Heart left ventricle (tissue), 16 donors: ENCODE measurements at regions of chr1 and their contacts with region 1.

Region 1: DNA sequence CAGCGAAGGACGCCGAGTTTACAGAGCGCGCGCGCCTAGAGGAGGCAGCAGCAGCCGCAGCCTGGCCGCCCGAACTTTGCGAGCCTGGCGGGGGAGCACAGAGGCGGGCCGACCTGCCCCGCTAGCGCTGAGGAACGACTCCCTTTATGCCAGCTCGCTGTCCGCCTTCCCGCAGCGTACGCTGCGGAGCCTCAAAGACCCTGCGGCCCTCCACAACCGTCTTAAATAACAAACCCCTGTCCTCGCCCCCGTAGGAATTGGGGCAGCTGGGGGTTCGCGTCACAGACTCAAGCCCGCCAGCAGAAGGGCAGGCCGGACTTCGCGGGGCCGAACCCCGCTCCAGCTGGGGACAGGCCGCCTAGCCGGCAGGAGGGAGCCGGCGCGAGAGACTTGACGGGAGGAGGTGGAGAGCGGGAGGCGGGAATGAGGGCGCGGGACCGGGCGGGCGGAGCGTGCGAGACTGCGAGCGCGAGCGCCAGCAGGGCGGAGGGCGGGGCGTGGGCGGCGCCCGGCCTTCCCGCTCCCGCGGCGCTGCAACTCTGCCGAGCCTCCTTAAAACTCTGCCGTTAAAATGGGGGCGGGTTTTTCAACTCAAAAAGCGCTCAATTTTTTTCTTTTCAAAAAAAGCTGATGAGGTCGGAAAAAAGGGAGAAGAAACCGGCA is 1.8 kb upstream of the CDKN2C start:
- DNase-seq: peak; percentile 94 to 96 (median 95)
- ATAC-seq: peak; percentile 90 to 96 (median 95)
- H3K4me3 ChIP-seq: peak overlapping the region; percentile 57 to 91 (median 82)
- H3K27ac ChIP-seq: peak overlapping the region; percentile 92 to 99 (median 96)
- H3K4me1 ChIP-seq: peaks cover 0 to 39% (median 12%) of the 10 kb centered on the region in 12 donors
- H3K27me3 ChIP-seq: no peaks in the 10 kb centered on the region
- CTCF ChIP-seq: peak in 11 of 12 donors; percentile 12 to 56 (median 41)
- POLR2A ChIP-seq: peak in 1 of 2 donors; percentile 70

Region 2: DNA sequence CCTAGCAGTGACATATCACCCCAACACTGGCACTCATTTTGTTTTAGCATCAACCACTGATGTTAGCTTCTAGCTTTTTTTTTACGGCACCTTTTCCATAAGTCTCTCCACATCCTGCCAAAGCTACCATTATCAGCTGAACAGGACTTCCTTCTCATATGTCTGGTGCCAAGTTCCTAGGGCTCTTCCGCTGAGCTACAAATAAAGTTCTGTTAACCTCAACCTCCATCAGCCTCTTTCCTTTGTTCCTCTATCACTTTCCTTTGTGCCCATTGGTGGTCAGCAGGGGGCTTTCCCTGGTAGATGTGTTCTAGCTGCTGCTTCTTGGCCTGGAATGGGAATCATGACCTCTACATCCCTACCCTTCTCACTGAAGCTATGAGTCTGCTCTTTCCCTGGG is 172.0 kb before region 1 on chr1:
- intact Hi-C with region 1: no loop called
- DNase-seq: no peak
- ATAC-seq: no peak
- H3K4me3 ChIP-seq: no peak overlapping the region
- H3K27ac ChIP-seq: no peak overlapping the region
- H3K4me1 ChIP-seq: peaks cover 0 to 5% (median 0%) of the 10 kb centered on the region in 12 donors
- H3K27me3 ChIP-seq: no peaks in the 10 kb centered on the region
- CTCF ChIP-seq: no peak
- POLR2A ChIP-seq: no peak

Region 3: GRCh38 chr1:50929376-50929958 is 38.8 kb before region 1 on chr1:
- intact Hi-C with region 1: loop called in 1 of 10 experiments (anchors 5 kb)
- DNase-seq: no peak
- ATAC-seq: no peak
- H3K4me3 ChIP-seq: no peak overlapping the region
- H3K27ac ChIP-seq: no peak overlapping the region
- H3K4me1 ChIP-seq: peaks cover 0 to 14% (median 1%) of the 10 kb centered on the region in 12 donors
- H3K27me3 ChIP-seq: no peaks in the 10 kb centered on the region
- CTCF ChIP-seq: peak; percentile 39 to 71 (median 53)
- POLR2A ChIP-seq: no peak

Region 4: DNA sequence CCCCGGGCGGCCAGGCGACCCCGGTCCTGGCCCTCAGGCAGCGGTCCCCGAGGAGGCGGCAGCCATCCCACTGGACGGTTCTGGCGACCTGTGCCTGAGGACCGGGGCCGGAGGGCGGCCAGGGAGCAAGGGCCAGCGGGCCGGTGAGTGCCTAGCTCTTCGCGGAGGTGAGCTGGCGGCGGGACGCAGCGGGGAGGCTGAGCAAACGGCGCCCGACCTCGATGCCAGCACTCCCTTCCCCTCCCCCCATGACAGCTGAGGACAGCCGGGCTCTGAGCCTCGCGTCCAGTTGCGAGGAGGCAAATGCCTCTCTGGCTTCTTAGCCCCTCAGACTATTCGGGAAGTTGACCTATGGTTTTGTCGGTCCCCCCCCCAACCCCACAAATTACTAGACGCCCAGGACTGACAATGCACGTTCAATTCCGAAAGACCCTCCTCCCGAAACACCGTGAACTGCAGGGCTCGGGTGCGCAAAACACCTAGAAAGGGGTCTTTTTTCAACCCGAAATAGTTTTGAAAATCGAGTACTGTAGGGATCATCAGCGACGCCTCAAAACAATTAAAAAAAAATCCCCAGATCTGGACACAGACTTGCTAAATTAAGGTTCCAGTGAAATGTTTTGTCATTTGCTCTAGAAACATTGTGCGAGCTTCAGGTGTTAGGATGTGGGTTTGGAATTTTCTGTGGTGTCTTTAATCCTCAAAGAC is 10.0 kb after region 1 on chr1:
- intact Hi-C with region 1: loop called in 1 of 10 experiments (anchors 1 kb)
- DNase-seq: peak; percentile 71 to 86 (median 82)
- ATAC-seq: peak; percentile 63 to 86 (median 80)
- H3K4me3 ChIP-seq: peak overlapping the region; percentile 76 to 96 (median 86)
- H3K27ac ChIP-seq: peak overlapping the region; percentile 93 to 100 (median 99)
- H3K4me1 ChIP-seq: peaks cover 0 to 49% (median 6%) of the 10 kb centered on the region in 12 donors
- H3K27me3 ChIP-seq: peaks cover 0 to 10% (median 0%) of the 10 kb centered on the region in 9 donors
- CTCF ChIP-seq: no peak
- POLR2A ChIP-seq: no peak

Region 5: GRCh38 chr1:51019811-51020210 is 51.5 kb after region 1 on chr1:
- intact Hi-C with region 1: no loop called
- DNase-seq: no peak
- ATAC-seq: no peak
- H3K4me3 ChIP-seq: no peak overlapping the region
- H3K27ac ChIP-seq: no peak overlapping the region
- H3K4me1 ChIP-seq: peaks cover 0 to 9% (median 0%) of the 10 kb centered on the region in 12 donors
- H3K27me3 ChIP-seq: no peaks in the 10 kb centered on the region
- CTCF ChIP-seq: no peak
- POLR2A ChIP-seq: no peak

Region 6: DNA sequence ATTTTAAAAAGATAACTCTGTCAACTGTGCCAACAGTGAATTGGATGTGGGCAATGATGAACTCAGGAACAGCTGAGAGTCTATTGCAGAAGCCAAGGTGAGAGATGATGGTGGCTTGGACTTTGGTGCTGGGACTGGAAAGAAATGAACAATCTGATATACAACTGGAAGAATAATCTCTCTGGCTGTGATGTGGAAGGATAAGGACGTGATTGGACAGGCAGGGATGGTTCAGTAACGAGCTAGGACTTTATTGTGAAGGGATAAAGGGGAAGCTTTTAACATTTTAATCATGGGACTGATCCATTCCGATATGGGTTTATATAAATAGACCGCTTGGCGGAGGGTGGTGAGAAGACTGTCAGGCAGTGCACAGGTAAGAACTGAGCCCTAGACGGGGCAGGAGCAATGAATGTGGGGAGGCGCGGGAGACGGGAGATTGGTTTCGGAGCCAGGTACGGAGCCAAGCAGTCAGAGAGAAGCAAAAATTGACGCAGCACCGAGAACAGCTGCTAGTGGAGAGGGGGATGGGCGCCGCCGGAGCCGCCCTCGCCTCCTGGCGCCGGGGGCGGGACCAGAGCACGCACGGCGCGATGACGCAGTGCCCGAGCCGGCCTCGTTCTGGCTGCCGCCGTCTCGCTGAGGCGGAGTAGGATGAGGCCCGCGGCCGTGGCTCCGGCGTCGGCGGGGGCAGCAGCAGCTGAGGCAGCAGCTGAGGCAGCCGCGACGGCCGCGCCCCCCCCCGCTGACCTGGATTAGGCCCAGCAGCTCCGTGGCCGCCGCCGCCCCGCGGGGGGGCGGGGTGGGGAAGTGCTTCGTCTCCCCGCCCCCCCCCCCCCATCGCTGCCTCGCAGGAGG is 267.6 kb after region 1 on chr1 and contains the start of gene RNF11:
- intact Hi-C with region 1: loop called in 2 of 10 experiments (anchors 5 to 10 kb)
- DNase-seq: peak; percentile 94 to 96 (median 95)
- ATAC-seq: peak; percentile 93 to 99 (median 98)
- H3K4me3 ChIP-seq: peak within 1 kb of the TSS; percentile 76 to 99 (median 94)
- H3K27ac ChIP-seq: peak within 1 kb of the TSS; percentile 90 to 98 (median 96)
- H3K4me1 ChIP-seq: peaks cover 0 to 44% (median 41%) of the 10 kb centered on the region in 12 donors
- H3K27me3 ChIP-seq: no peaks in the 10 kb centered on the region
- CTCF ChIP-seq: peak in 1 of 12 donors; percentile 9
- POLR2A ChIP-seq: peak; percentile 70 to 96
- total RNA-seq, gene RNF11: 77.3 to 139 (median 107) TPM